CD8-positive, alpha-beta T cell (primary cell): ENCODE measurements at regions of chr20 and their contacts with region 1.

Region 1: GRCh38 chr20:62937366-62938104 is 412 bp upstream of the GID8 start:
- DNase-seq: peak; percentile 94 to 98 (median 97)
- ATAC-seq: peak; percentile 89
- H3K4me3 ChIP-seq: peak overlapping the region; percentile 96 to 99
- H3K4me3 Mint-ChIP-seq: peak overlapping the region; percentile 97
- H3K27ac ChIP-seq: peak overlapping the region; percentile 88 to 92
- H3K27ac Mint-ChIP-seq: peak overlapping the region; percentile 96
- H3K4me1 ChIP-seq: peaks cover 57% of the 10 kb centered on the region
- H3K4me1 Mint-ChIP-seq: peaks cover 36% of the 10 kb centered on the region
- H3K27me3 ChIP-seq: no peaks in the 10 kb centered on the region
- H3K27me3 Mint-ChIP-seq: no peaks in the 10 kb centered on the region
- CTCF ChIP-seq: no peak

Region 2: GRCh38 chr20:62501801-62502495 is 435.6 kb before region 1 on chr20:
- CTCF ChIA-PET with region 1: no interaction called
- POLR2A ChIA-PET with region 1: no interaction called
- intact Hi-C with region 1: no loop called
- DNase-seq: peak in 7 of 9 experiments; percentile 11 to 78 (median 45)
- ATAC-seq: peak; percentile 86
- H3K4me3 ChIP-seq: no peak overlapping the region
- H3K4me3 Mint-ChIP-seq: no peak overlapping the region
- H3K27ac ChIP-seq: no peak overlapping the region
- H3K27ac Mint-ChIP-seq: no peak overlapping the region
- H3K4me1 ChIP-seq: peaks cover 7% of the 10 kb centered on the region
- H3K4me1 Mint-ChIP-seq: peaks cover 11% of the 10 kb centered on the region
- H3K27me3 ChIP-seq: no peaks in the 10 kb centered on the region
- H3K27me3 Mint-ChIP-seq: no peaks in the 10 kb centered on the region
- CTCF ChIP-seq: no peak

Region 3: GRCh38 chr20:62642040-62642665 is 295.4 kb before region 1 on chr20 and contains the start of gene SLCO4A1:
- CTCF ChIA-PET with region 1: no interaction called
- POLR2A ChIA-PET with region 1: no interaction called
- intact Hi-C with region 1: loop called in 1 of 2 experiments (anchors 2 kb)
- DNase-seq: peak; percentile 57 to 90 (median 80)
- ATAC-seq: peak; percentile 92
- H3K4me3 ChIP-seq: peak within 1 kb of the TSS; percentile 34 to 59
- H3K4me3 Mint-ChIP-seq: peak within 1 kb of the TSS; percentile 85
- H3K27ac ChIP-seq: no peak within 1 kb of the TSS
- H3K27ac Mint-ChIP-seq: no peak within 1 kb of the TSS
- H3K4me1 ChIP-seq: peaks cover 21% of the 10 kb centered on the region
- H3K4me1 Mint-ChIP-seq: peaks cover 7% of the 10 kb centered on the region
- H3K27me3 ChIP-seq: no peaks in the 10 kb centered on the region
- H3K27me3 Mint-ChIP-seq: peaks cover 2% of the 10 kb centered on the region
- CTCF ChIP-seq: no peak
- total RNA-seq, gene SLCO4A1: 4.5 to 4.7 TPM

Region 4: GRCh38 chr20:62861726-62862336 is 75.7 kb before region 1 on chr20 and contains the start of gene TCFL5:
- CTCF ChIA-PET with region 1: no interaction called
- POLR2A ChIA-PET with region 1: interaction called, 4 read pairs
- intact Hi-C with region 1: loop called in 1 of 2 experiments (anchors 1 kb)
- DNase-seq: peak; percentile 88 to 99 (median 93)
- ATAC-seq: peak; percentile 90
- H3K4me3 ChIP-seq: peak within 1 kb of the TSS; percentile 20 to 26
- H3K4me3 Mint-ChIP-seq: peak within 1 kb of the TSS; percentile 77
- H3K27ac ChIP-seq: peak within 1 kb of the TSS in 1 of 2 experiments; percentile 56
- H3K27ac Mint-ChIP-seq: peak within 1 kb of the TSS; percentile 88
- H3K4me1 ChIP-seq: peaks cover 15% of the 10 kb centered on the region
- H3K4me1 Mint-ChIP-seq: peaks cover 20% of the 10 kb centered on the region
- H3K27me3 ChIP-seq: no peaks in the 10 kb centered on the region
- H3K27me3 Mint-ChIP-seq: no peaks in the 10 kb centered on the region
- CTCF ChIP-seq: no peak
- total RNA-seq, gene TCFL5: 4.3 to 4.8 TPM

Region 5: GRCh38 chr20:62907384-62908317 is 29.9 kb before region 1 on chr20:
- CTCF ChIA-PET with region 1: interaction called, 12 read pairs
- POLR2A ChIA-PET with region 1: interaction called, 5 read pairs
- intact Hi-C with region 1: no loop called
- DNase-seq: peak in 4 of 9 experiments; percentile 60 to 74 (median 63)
- ATAC-seq: peak; percentile 96
- H3K4me3 ChIP-seq: no peak overlapping the region
- H3K4me3 Mint-ChIP-seq: no peak overlapping the region
- H3K27ac ChIP-seq: no peak overlapping the region
- H3K27ac Mint-ChIP-seq: peak overlapping the region; percentile 37
- H3K4me1 ChIP-seq: peaks cover 7% of the 10 kb centered on the region
- H3K4me1 Mint-ChIP-seq: peaks cover 28% of the 10 kb centered on the region
- H3K27me3 ChIP-seq: no peaks in the 10 kb centered on the region
- H3K27me3 Mint-ChIP-seq: no peaks in the 10 kb centered on the region
- CTCF ChIP-seq: peak; percentile 70

Region 6: DNA sequence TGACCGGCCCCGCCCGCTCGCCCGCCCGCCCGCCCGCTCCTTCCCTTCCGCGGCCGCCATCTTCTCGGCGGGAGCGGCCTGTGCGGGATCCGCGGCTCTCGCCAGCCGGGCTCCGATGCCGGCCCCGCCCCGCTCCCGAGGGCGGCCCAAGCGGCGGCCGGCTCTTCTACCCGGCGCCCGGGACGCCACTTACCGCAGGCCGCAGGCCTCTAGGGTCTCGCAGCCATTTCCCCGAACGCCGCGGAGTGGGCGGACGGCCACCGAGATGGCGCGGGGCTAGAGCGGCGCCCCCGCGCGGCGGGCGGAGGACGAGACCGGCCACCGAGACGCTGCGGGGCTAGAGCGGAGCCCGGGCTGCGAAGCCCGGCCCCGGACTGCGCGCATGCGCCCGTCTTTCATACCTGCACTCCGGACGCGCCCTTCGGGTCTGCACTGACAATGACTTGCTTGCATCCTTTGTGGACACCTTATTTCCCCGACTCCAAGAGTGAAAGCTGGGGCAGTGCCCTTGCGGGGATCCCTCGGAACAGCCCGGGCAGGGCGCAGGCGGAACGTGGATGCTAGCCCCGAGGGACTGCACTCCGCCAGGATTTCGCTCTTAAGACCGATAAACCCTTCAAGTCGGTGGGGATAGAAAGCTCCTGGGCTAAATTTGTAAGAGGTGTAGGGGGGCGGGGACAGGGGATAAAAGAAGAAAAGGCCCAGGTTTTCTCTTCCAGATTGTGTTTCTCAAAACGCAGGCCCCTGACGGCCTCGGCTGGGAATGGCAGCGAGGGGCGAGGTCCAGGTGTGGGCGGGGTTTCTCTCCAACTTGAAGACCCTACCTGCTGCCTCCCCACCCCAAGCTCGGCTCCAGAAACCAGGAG is 11.1 kb before region 1 on chr20 and contains the start of gene DIDO1:
- CTCF ChIA-PET with region 1: interaction called, 28 read pairs
- POLR2A ChIA-PET with region 1: interaction called, 49 read pairs
- intact Hi-C with region 1: loop called (anchors 1 kb)
- DNase-seq: peak; percentile 76 to 95 (median 91)
- ATAC-seq: peak; percentile 76
- H3K4me3 ChIP-seq: peak within 1 kb of the TSS; percentile 70 to 99
- H3K4me3 Mint-ChIP-seq: peak within 1 kb of the TSS; percentile 95
- H3K27ac ChIP-seq: peak within 1 kb of the TSS; percentile 75 to 96
- H3K27ac Mint-ChIP-seq: peak within 1 kb of the TSS; percentile 95
- H3K4me1 ChIP-seq: peaks cover 68% of the 10 kb centered on the region
- H3K4me1 Mint-ChIP-seq: peaks cover 75% of the 10 kb centered on the region
- H3K27me3 ChIP-seq: no peaks in the 10 kb centered on the region
- H3K27me3 Mint-ChIP-seq: no peaks in the 10 kb centered on the region
- CTCF ChIP-seq: peak; percentile 53
- total RNA-seq, gene DIDO1: 44.7 to 46.6 TPM

Region 7: DNA sequence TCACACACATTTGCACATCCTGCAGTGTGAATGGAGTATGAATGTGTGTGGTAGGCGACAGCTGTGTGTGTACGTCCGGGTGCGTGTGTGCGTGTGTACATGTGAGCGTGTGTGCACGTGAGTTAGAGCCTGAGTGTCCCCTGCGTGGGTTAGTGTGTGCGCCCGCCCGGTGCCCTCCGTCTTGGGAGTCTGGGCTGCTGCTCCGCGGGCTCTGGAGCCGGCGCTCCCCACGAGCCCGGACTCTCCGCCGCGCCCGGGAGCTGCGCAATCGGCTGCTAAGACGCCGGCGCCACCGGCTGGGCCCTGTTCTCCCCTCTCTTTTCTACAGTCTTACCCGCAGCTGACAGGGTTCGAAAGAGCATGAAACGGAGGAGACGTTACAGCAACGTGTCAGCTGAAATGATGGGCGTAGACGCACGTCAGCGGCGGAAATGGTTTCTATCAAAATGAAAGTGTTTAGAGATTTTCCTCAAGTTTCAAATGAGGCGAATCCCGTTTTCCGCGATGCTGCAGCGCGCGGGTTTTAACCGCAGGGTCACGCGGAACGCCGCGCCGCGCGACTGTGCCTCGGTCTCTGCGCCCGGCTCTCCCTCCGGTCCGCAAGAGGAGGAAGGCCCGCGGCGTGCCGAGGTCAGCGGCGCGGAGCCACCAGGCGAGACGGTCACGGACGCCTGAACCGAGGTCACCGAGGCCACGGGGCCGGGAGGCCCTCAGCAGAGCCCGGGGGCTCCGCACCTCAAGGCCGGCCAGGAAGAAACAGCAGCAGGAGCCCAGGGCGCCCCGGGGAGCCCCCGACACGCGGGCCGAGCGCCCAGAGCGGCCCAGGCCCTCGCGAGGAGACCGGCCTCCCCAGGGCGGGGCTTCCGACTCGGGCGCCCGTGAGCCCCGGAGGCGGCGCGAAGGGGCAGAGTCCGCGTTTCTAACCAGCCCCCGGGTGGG is 164.5 kb after region 1 on chr20:
- CTCF ChIA-PET with region 1: no interaction called
- POLR2A ChIA-PET with region 1: no interaction called
- intact Hi-C with region 1: loop called in 1 of 2 experiments (anchors 10 kb)
- DNase-seq: peak; percentile 30 to 84 (median 59)
- ATAC-seq: peak; percentile 68
- H3K4me3 ChIP-seq: peak overlapping the region; percentile 74 to 98
- H3K4me3 Mint-ChIP-seq: peak overlapping the region; percentile 87
- H3K27ac ChIP-seq: peak overlapping the region; percentile 89 to 98
- H3K27ac Mint-ChIP-seq: peak overlapping the region; percentile 91
- H3K4me1 ChIP-seq: no peaks in the 10 kb centered on the region
- H3K4me1 Mint-ChIP-seq: peaks cover 11% of the 10 kb centered on the region
- H3K27me3 ChIP-seq: no peaks in the 10 kb centered on the region
- H3K27me3 Mint-ChIP-seq: no peaks in the 10 kb centered on the region
- CTCF ChIP-seq: no peak